ENCODE measurements at regions of chr6 and their contacts with region 1.

Region 1: DNA sequence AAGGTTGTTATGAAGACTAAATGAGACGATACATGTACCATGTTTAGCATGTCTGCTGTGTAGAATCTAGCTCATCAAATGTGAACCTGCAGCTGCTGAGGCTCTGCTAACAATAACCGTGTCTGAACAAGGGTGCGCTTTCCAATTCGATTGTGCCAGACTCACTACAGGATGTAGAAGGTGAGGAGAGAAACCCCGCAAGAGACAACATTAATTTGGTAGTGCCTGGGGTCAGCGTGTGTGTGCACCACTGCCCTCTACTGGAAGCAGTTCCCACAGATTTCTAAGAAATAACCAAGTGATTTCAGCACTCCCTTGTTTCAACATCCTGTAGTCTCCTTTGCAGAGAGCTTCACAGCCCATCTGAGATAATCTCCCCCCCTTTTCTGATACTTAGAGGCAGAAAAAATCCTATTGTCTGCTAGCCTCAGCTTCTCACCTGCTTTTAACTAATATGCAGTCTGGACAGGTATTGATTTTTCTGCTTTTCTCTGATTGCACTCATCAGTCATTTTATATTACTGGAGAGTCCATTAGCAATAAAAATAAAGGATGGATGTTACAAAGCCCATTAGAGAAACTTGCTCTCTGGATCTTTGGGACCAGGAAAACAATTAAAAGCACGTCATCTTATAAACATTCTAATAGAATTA is 96.7 kb upstream of the BACH2 start:
- DNase-seq: peak; percentile 47
- ATAC-seq: peak; percentile 53
- H3K4me3 Mint-ChIP-seq: peak overlapping the region; percentile 28
- H3K27ac Mint-ChIP-seq: peak overlapping the region; percentile 59
- H3K4me1 Mint-ChIP-seq: peaks cover 45% of the 10 kb centered on the region
- H3K27me3 Mint-ChIP-seq: no peaks in the 10 kb centered on the region
- CTCF ChIP-seq: peak; percentile 67

Region 2: DNA sequence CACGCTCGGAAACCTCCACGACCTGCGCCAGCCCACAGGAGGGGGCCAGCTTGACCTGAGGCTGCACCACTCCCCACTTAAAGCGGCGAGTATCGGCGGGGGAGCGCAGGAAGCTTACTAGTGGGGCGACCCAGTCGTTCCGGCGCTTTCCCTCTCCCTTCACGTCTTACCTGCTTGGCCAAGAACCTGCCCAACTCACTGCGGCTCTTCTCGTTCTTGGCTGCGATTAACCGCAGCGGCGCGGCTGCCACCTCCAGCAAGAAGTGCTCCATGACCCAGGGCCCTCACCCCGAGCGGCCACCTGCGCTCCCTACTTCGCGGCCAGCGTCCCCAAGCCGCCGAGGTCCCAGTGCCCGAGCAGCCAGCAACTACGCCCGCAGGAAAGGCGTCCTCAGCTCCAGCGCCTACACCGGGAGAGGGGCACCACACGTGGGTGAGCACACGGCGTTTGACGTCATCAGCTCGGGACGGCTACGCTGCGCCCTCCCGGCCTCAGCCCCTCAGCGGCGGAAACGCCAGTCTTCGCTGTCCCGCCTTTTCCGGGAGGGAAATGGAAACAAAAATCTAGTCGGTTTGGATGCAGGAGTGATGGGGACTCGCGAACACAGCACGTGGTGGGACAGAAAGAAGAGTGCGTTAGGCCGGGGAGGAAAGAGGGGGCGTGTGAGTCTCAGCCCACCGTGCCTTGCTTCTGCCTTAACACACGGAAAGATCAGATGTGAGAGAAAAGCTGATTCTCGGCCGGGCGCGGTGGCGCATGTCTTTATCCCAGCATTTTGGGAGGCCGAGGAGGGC is 573.8 kb before region 1 on chr6 and contains the start of gene MDN1:
- CTCF ChIA-PET with region 1: no interaction called
- POLR2A ChIA-PET with region 1: no interaction called
- intact Hi-C with region 1: loop called (anchors 2 kb)
- DNase-seq: peak; percentile 76
- ATAC-seq: peak; percentile 94
- H3K4me3 Mint-ChIP-seq: peak within 1 kb of the TSS; percentile 95
- H3K27ac Mint-ChIP-seq: peak within 1 kb of the TSS; percentile 95
- H3K4me1 Mint-ChIP-seq: peaks cover 33% of the 10 kb centered on the region
- H3K27me3 Mint-ChIP-seq: no peaks in the 10 kb centered on the region
- CTCF ChIP-seq: no peak
- total RNA-seq, gene MDN1: 59.8 and 65.4 TPM in 2 replicates

Region 3: GRCh38 chr6:89970609-89971337 is 422.6 kb before region 1 on chr6:
- CTCF ChIA-PET with region 1: interaction called, 10 read pairs
- POLR2A ChIA-PET with region 1: no interaction called
- intact Hi-C with region 1: loop called (anchors 1 kb)
- DNase-seq: no peak
- ATAC-seq: peak; percentile 61
- H3K4me3 Mint-ChIP-seq: no peak overlapping the region
- H3K27ac Mint-ChIP-seq: no peak overlapping the region
- H3K4me1 Mint-ChIP-seq: peaks cover 12% of the 10 kb centered on the region
- H3K27me3 Mint-ChIP-seq: no peaks in the 10 kb centered on the region
- CTCF ChIP-seq: no peak

Region 4: DNA sequence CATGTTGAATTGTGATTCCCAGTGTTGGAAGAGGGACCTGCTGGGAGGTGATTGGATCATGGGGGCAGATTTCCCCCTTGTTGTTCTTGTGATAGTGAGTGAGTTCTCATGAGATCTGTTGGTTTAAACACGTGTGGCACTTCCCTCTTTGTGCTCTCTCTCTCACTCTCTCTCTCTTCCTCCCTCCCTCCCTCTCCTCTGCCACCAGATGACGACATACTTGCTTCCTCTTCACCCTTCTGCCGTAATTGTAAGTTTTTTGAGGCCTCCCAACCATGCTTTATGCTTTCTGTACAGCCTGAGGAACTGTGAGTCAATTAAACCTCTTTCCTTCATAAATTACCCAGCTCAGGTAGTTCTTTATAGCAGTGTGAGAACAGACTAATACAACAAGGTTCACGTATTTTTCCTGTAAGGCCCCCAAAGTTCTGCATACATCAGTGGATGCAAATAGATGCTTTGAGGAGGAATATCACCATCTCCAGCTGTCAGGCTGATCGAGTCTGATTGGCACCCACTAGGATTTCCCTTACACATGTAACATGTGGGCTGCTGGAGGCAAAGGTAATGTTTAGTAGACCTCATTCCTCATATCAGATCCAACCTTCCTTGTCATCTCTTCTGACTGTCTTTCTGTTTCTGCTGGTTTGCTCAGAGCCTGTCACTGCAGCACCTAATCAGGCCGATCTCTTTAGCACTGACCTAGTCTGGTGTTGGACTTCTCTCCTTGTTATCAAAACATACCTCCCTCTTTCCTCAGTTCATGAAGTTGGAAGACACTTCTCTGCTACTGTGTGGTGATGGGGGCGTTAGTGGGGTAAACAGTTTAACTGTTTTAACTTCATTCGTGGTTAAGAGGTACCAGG is 42.4 kb before region 1 on chr6:
- CTCF ChIA-PET with region 1: interaction called, 3 read pairs
- POLR2A ChIA-PET with region 1: interaction called, 3 read pairs
- intact Hi-C with region 1: loop called (anchors 1 kb)
- DNase-seq: peak; percentile 20
- ATAC-seq: peak; percentile 95
- H3K4me3 Mint-ChIP-seq: peak overlapping the region; percentile 33
- H3K27ac Mint-ChIP-seq: peak overlapping the region; percentile 95
- H3K4me1 Mint-ChIP-seq: peaks cover 40% of the 10 kb centered on the region
- H3K27me3 Mint-ChIP-seq: no peaks in the 10 kb centered on the region
- CTCF ChIP-seq: no peak

Region 5: DNA sequence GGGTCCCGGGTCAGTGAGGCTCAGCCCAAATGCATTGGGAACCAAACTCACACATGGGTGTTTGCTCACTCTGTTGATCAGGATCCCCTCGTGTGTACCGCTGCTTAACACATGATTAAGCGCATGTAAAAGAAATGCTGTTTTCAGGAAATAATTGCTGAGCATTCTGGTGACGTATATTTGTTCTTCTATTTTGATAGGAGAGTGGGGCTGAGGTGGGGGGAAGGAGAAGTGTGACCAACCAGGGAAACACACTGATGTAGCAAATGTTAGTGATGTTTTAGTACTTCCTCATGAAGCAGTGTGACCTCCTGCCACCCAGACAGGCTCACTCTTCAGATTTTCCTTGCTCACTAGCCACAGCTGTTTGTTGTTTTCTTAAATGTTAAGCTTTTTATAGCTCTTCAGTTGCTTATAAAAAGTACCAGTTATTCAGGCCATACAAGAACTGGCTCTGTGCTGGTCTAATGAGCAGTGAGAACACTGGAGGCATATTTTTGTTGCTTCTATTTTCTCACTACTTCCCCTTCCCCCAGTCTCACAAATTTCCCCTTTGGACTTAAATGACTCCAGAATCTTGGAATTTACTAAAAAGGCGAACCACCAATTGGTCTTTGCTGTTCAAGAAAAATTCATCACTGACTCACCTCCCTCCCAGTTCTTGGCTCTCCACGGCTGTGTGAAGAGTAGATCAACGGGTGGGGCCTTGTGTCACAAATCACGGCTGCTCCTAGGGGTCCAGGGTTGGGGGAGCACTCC is 17.5 kb before region 1 on chr6:
- CTCF ChIA-PET with region 1: interaction called, 13 read pairs
- POLR2A ChIA-PET with region 1: interaction called, 5 read pairs
- intact Hi-C with region 1: loop called (anchors 1 kb)
- DNase-seq: peak; percentile 43
- ATAC-seq: peak; percentile 95
- H3K4me3 Mint-ChIP-seq: peak overlapping the region; percentile 50
- H3K27ac Mint-ChIP-seq: peak overlapping the region; percentile 94
- H3K4me1 Mint-ChIP-seq: peaks cover 72% of the 10 kb centered on the region
- H3K27me3 Mint-ChIP-seq: no peaks in the 10 kb centered on the region
- CTCF ChIP-seq: no peak

Region 6: DNA sequence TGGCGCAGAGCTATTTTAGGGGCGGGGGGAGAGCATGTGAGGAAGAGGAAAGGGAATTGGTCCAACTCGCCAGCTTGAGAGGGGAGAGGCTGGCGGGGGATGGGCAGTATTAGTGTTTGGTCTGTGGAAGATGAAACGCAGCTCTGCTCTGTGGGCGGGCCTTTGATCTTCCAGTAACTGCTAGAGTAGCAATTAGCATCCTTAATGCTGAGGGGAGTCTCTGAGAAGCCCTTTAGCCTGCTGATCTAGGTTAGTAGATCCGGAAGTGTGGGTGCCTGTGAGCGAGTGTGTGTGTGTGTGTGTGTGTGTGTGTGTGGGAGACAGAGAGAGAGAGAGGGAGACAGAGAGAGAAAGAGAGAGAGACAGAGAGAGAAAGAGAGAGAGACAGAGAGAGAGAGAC is 20.5 kb after region 1 on chr6:
- CTCF ChIA-PET with region 1: interaction called, 16 read pairs
- POLR2A ChIA-PET with region 1: interaction called, 10 read pairs
- intact Hi-C with region 1: loop called (anchors 1 kb)
- DNase-seq: no peak
- ATAC-seq: peak; percentile 64
- H3K4me3 Mint-ChIP-seq: peak overlapping the region; percentile 70
- H3K27ac Mint-ChIP-seq: peak overlapping the region; percentile 84
- H3K4me1 Mint-ChIP-seq: peaks cover 32% of the 10 kb centered on the region
- H3K27me3 Mint-ChIP-seq: no peaks in the 10 kb centered on the region
- CTCF ChIP-seq: no peak